Activated CD8-positive, alpha-beta T cell treated with anti-CD3 and anti-CD28 coated beads for 36 hours (primary cell): ENCODE measurements at regions of chr1 and their contacts with region 1.

Region 1: GRCh38 chr1:223123011-223123610 is 19.9 kb downstream of the TLR5 start:
- DNase-seq: no peak
- ATAC-seq: no peak
- H3K4me3 Mint-ChIP-seq: no peak overlapping the region
- H3K27ac Mint-ChIP-seq: no peak overlapping the region
- H3K4me1 Mint-ChIP-seq: peaks cover 7% of the 10 kb centered on the region
- H3K27me3 Mint-ChIP-seq: no peaks in the 10 kb centered on the region
- CTCF ChIP-seq: no peak

Region 2: DNA sequence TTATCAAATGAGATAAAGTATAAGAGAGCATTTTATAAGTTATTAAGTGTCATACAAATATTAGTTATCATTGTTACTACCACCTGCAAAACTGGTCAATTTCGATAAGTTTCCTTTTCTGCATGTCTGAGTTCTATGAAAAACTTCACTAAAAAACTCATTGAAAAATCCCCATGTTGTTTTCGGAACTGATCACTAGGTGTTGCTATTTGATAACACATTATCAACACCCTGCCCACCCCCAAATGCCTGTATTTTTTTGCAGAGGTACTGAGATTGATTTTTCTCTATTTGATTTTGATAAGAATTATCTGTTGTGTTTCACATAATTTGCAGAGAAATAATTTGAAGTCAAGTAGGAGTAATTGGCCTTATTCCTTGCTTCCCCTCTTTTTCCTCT is 330.4 kb before region 1 on chr1:
- CTCF ChIA-PET with region 1: interaction called, 16 read pairs
- POLR2A ChIA-PET with region 1: no interaction called
- intact Hi-C with region 1: loop called (anchors 5 kb)
- DNase-seq: no peak
- ATAC-seq: no peak
- H3K4me3 Mint-ChIP-seq: no peak overlapping the region
- H3K27ac Mint-ChIP-seq: no peak overlapping the region
- H3K4me1 Mint-ChIP-seq: peaks cover 22% of the 10 kb centered on the region
- H3K27me3 Mint-ChIP-seq: no peaks in the 10 kb centered on the region
- CTCF ChIP-seq: peak; percentile 70

Region 3: GRCh38 chr1:222987674-222988076 is 135.4 kb before region 1 on chr1:
- CTCF ChIA-PET with region 1: no interaction called
- POLR2A ChIA-PET with region 1: no interaction called
- intact Hi-C with region 1: no loop called
- DNase-seq: no peak
- ATAC-seq: no peak
- H3K4me3 Mint-ChIP-seq: no peak overlapping the region
- H3K27ac Mint-ChIP-seq: no peak overlapping the region
- H3K4me1 Mint-ChIP-seq: peaks cover 5% of the 10 kb centered on the region
- H3K27me3 Mint-ChIP-seq: no peaks in the 10 kb centered on the region
- CTCF ChIP-seq: no peak

Region 4: GRCh38 chr1:223022641-223023473 is 100.3 kb before region 1 on chr1:
- CTCF ChIA-PET with region 1: no interaction called
- POLR2A ChIA-PET with region 1: no interaction called
- intact Hi-C with region 1: no loop called
- DNase-seq: no peak
- ATAC-seq: no peak
- H3K4me3 Mint-ChIP-seq: no peak overlapping the region
- H3K27ac Mint-ChIP-seq: no peak overlapping the region
- H3K4me1 Mint-ChIP-seq: no peaks in the 10 kb centered on the region
- H3K27me3 Mint-ChIP-seq: no peaks in the 10 kb centered on the region
- CTCF ChIP-seq: no peak

Region 5: GRCh38 chr1:223087291-223088255 is 35.5 kb before region 1 on chr1:
- CTCF ChIA-PET with region 1: interaction called, 39 read pairs
- POLR2A ChIA-PET with region 1: interaction called, 3 read pairs
- intact Hi-C with region 1: no loop called
- DNase-seq: no peak
- ATAC-seq: no peak
- H3K4me3 Mint-ChIP-seq: no peak overlapping the region
- H3K27ac Mint-ChIP-seq: no peak overlapping the region
- H3K4me1 Mint-ChIP-seq: peaks cover 9% of the 10 kb centered on the region
- H3K27me3 Mint-ChIP-seq: no peaks in the 10 kb centered on the region
- CTCF ChIP-seq: no peak

Region 6: GRCh38 chr1:223142795-223143536 is 19.9 kb after region 1 on chr1 and contains the start of gene TLR5:
- CTCF ChIA-PET with region 1: interaction called, 21 read pairs
- POLR2A ChIA-PET with region 1: no interaction called
- intact Hi-C with region 1: no loop called
- DNase-seq: peak; percentile 92
- ATAC-seq: peak; percentile 90
- H3K4me3 Mint-ChIP-seq: peak within 1 kb of the TSS; percentile 68
- H3K27ac Mint-ChIP-seq: peak within 1 kb of the TSS; percentile 75
- H3K4me1 Mint-ChIP-seq: peaks cover 14% of the 10 kb centered on the region
- H3K27me3 Mint-ChIP-seq: no peaks in the 10 kb centered on the region
- CTCF ChIP-seq: peak; percentile 79
- total RNA-seq, gene TLR5: 0.11 to 0.38 TPM

Region 7: DNA sequence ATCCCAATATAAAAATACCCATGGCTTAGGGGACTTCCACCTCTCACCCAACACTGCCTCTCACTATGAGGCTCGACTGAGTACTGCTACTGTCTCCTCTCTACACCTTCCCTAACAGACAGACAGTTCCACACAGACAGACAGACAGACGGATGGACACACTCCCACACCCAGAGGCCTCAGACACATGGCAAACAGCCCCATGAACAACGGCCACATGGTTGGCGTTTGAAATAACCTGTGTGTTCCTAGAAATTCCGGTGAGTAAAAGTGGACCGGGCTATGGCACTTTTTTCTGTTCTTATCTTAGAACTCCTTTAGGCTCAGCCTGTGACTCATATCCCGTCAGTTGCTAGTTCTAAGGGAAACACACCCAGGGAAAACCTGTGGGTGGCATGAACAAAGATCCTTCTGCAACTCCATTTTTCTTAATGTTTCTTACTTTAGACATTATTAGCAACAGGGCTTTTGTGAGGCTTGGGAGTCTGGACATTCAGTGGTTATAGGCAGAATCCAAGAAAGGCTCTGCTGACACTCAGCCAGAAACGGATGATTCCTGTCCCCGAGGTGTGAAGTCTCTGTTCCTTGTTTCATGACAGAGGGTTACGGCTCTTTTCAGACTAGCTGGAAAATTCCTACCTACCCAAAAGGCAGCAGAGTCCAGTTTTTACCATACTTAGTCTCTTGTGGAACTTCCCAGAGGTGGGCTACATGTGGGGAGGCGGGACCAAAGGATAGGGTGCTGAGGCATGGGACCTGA is 110.5 kb after region 1 on chr1:
- CTCF ChIA-PET with region 1: interaction called, 10 read pairs
- POLR2A ChIA-PET with region 1: no interaction called
- intact Hi-C with region 1: no loop called
- DNase-seq: peak; percentile 16
- ATAC-seq: peak; percentile 38
- H3K4me3 Mint-ChIP-seq: no peak overlapping the region
- H3K27ac Mint-ChIP-seq: no peak overlapping the region
- H3K4me1 Mint-ChIP-seq: peaks cover 56% of the 10 kb centered on the region
- H3K27me3 Mint-ChIP-seq: no peaks in the 10 kb centered on the region
- CTCF ChIP-seq: no peak

Region 8: DNA sequence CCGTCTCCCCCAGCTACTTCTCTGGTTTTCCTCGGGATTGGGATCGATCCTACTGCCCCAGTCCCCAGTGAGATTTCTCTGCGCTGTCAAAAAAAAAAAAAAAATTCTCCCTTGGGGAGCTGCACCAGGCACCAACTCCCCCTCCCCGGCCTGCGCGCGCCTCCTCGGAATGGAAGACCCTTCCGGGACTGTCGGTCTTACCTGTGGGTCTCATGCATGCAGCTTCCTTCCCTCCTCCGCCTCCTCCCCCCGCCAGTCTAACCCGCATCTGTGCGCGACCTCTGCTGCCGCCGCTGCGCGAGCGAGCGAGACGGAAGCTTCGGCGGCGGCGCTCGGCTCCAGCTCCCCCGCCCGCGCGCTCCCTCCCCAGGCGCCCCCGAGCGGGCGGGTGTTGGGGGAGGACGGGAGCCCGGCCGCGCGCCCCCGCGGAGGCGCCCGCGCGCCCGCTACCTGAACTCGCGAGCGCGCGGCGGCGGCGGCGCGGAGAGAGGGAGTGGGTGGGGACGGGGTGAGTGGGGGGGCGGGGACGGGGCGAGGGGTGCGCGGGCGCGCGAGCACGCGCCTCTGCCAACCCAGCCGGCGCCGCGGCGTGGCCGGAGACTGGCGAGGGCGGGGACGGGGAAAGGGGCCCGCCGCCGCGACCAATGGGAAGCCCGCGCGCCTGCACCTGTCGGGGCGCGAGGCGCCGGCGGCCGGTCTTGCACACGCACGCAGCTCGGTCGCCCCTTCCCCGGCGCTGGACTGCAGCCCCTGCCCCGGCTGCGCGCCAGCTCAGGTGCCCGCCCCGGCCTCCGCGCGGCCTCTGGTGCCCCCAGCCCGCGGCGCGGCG is 241.0 kb after region 1 on chr1 and contains the start of gene SUSD4:
- CTCF ChIA-PET with region 1: interaction called, 15 read pairs
- POLR2A ChIA-PET with region 1: no interaction called
- intact Hi-C with region 1: no loop called
- DNase-seq: peak; percentile 74
- ATAC-seq: peak; percentile 91
- H3K4me3 Mint-ChIP-seq: peak within 1 kb of the TSS; percentile 82
- H3K27ac Mint-ChIP-seq: no peak within 1 kb of the TSS
- H3K4me1 Mint-ChIP-seq: peaks cover 16% of the 10 kb centered on the region
- H3K27me3 Mint-ChIP-seq: peaks cover 31% of the 10 kb centered on the region
- CTCF ChIP-seq: no peak
- total RNA-seq, gene SUSD4: 0.29 to 0.43 TPM

Region 9: DNA sequence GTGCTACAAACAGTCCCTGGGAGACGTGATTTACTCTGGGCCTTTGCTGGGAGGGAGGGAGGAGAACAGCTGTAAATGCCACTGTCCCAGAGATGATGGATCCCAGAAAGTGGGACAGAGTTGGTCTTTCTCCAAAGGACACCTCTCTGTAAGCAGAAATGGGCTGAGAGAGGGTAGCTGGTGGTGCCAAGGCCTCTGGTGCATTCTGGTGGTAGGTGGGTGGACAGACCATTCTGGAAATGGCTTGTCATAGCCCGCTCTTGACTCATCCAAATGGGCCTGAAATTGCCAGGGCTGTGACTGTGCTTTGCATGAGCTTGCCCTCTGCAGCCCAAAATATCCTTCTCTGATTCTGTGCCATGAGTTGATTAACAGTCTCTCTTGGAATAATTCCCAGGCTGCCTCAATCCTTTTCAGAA is 306.2 kb after region 1 on chr1:
- CTCF ChIA-PET with region 1: no interaction called
- POLR2A ChIA-PET with region 1: no interaction called
- intact Hi-C with region 1: no loop called
- DNase-seq: no peak
- ATAC-seq: no peak
- H3K4me3 Mint-ChIP-seq: no peak overlapping the region
- H3K27ac Mint-ChIP-seq: no peak overlapping the region
- H3K4me1 Mint-ChIP-seq: no peaks in the 10 kb centered on the region
- H3K27me3 Mint-ChIP-seq: no peaks in the 10 kb centered on the region
- CTCF ChIP-seq: no peak